Lower leg skin (tissue), 4 donors: ENCODE measurements at regions of chr3 and their contacts with region 1.

Region 1: DNA sequence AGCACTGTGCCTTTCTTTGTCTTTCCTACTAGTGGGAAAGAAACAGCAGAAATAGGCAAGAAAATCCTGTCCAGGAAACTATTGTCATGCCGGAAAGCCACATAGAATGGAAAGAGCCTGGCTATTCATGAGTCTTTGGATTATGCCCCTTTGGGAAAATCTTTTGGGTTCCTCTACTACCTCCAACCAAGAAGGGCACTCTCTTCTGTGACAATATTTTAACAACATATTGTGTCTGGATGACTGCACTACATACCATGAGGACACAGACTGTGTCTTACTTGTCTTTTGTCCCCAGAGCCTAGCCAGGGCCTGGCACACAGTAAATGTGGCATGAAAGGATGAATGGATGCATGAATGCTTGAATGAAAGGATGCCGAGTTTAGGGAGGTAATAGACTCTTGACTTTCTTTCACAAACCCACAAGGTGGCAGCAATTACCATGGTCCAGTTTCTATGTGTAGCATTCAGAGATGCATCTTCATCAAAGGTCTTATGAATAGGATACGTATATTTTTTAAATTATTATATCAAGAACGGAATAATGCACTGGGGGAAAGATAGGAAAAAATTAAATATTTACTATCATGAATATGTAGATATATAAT is 30.3 kb downstream of the ARL14 start:
- DNase-seq: peak in 1 of 2 donors; percentile 36
- H3K4me3 ChIP-seq: no peak overlapping the region
- CTCF ChIP-seq: no peak
- POLR2A ChIP-seq: no peak

Region 2: DNA sequence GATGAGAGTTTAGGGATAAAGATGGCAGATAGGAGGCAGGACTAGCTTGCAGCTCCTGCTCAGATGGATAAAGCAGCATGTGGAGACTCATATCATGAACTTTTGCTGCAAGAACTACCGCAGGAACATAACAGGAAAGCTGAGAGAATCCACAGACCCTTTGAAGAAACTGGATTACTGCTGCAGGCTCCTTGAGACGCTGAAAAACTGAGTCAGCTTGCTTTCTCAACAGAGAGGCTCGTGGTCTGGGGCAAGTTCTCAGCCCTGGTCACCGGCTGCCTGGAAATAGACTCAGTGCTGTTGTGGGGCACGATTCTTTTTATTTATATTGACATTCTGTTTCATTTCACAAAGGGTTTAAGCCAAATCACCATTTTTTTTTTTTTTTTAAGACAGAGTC is 229.0 kb before region 1 on chr3:
- intact Hi-C with region 1: no loop called
- DNase-seq: no peak
- H3K4me3 ChIP-seq: no peak overlapping the region
- CTCF ChIP-seq: no peak
- POLR2A ChIP-seq: no peak

Region 3: DNA sequence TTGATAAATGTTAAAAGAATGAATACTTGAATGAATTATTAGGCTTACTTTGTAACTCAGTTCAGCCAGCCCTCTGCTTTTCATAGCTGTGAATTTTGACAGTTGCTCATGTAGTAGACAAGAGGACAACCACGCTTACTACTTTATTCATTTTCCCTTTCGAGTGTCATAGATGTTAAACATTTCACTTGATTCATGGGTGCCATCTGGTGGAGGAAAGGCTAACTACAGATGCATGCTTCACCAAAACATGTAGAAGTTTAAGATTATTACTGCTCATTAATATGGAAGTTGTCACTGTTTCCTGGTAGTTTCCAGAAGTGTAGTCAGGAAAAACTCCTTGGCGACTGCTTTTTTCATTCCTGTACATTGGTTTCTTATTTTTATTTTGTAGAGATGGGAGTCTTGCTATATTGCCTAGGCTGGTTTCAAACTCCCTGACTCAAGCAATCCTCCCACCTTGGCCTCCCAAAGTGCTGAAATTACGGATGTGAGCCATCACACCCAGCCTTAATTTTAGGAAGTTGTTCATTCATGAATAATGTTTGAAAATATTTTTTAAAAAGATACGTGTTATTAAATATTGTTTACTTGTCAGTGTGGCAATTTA is 234.7 kb after region 1 on chr3:
- intact Hi-C with region 1: loop called (anchors 5 kb)
- DNase-seq: peak; percentile 85 to 90
- H3K4me3 ChIP-seq: no peak overlapping the region
- CTCF ChIP-seq: peak in 1 of 3 donors; percentile 72
- POLR2A ChIP-seq: no peak